WTC11 (cell line): ENCODE measurements at regions of chr3 and their contacts with region 1.

Region 1: GRCh38 chr3:57382933-57383332 is 90.4 kb upstream of the ASB14 start:
- DNase-seq: no peak
- ATAC-seq: no peak
- H3K4me3 Mint-ChIP-seq: no peak overlapping the region
- H3K27ac Mint-ChIP-seq: no peak overlapping the region
- H3K4me1 Mint-ChIP-seq: peaks cover 12% of the 10 kb centered on the region
- H3K27me3 Mint-ChIP-seq: no peaks in the 10 kb centered on the region; the same call in 1 of the 2 replicates
- CTCF ChIP-seq: no peak

Region 2: DNA sequence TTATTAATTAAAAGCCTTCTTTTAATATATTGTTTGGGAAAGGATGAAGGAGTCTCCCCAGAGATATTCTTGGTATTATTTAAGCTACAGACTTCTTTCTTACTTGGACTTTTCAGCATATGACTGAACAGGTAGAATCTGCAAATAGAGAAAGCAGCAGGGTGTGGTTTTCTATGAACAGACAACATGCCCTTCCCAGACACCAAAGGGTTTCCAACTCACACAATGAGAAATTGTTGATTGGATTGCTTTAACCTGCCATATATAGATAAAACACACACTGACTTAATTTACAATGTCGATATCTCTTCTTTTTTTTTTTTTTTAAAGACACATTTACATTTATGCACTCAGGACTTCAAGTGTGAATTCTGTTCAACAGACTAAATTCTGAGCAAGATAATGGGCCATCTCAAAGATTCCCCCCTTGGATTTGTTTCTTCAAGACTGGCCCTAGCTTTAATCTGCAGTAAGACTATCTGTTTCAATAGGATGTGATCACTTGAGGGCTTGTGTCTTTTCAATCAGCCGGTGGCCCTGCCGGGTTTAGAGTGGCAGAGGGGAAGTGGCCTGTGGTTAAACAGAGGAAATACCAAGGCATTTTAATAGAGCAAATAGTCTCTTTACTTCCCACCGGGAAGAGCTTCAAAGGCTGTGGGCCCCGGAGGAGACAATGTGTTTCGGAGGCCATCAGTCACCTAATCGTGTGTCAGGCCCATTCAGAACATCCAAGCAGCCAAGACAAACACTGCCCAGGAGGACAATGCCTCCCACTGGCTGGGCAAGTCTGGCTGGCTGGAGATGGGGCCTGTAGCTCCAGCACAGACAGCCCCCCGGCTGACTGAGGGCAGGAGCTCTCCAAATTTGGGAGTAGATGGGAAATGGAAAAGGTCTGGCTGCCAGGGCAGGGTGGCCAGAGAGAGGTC is 223.9 kb before region 1 on chr3:
- CTCF ChIA-PET with region 1: no interaction called
- POLR2A ChIA-PET with region 1: no interaction called
- DNase-seq: peak; percentile 31
- ATAC-seq: peak; percentile 65
- H3K4me3 Mint-ChIP-seq: peak overlapping the region; percentile 22
- H3K27ac Mint-ChIP-seq: peak overlapping the region; percentile 96
- H3K4me1 Mint-ChIP-seq: peaks cover 93% of the 10 kb centered on the region
- H3K27me3 Mint-ChIP-seq: peaks cover 16% of the 10 kb centered on the region
- CTCF ChIP-seq: no peak

Region 3: DNA sequence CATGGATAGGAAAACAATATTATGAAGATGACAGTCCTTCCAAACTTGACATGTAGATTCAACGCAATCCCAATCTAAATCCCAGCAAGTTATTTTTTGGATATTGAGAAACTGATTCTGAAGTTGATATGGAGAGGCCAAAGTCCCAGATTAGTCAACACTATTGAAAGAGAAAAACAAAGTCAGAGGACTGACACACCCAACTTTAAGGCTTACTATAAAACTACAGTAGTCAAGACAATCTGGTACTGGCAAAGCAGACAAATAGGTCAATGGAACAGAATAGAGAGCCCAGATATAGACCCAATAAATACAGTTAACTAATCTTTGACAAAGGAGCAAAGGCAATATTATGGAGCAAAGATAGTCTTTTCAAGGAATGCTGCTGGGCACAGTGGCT is 28.8 kb after region 1 on chr3:
- CTCF ChIA-PET with region 1: no interaction called
- POLR2A ChIA-PET with region 1: interaction called, 14 read pairs
- DNase-seq: no peak
- ATAC-seq: no peak
- H3K4me3 Mint-ChIP-seq: no peak overlapping the region
- H3K27ac Mint-ChIP-seq: no peak overlapping the region
- H3K4me1 Mint-ChIP-seq: no peaks in the 10 kb centered on the region
- H3K27me3 Mint-ChIP-seq: no peaks in the 10 kb centered on the region
- CTCF ChIP-seq: no peak